PC-9 (cell line): ENCODE measurements at regions of chr17 and their contacts with region 1.

Region 1: DNA sequence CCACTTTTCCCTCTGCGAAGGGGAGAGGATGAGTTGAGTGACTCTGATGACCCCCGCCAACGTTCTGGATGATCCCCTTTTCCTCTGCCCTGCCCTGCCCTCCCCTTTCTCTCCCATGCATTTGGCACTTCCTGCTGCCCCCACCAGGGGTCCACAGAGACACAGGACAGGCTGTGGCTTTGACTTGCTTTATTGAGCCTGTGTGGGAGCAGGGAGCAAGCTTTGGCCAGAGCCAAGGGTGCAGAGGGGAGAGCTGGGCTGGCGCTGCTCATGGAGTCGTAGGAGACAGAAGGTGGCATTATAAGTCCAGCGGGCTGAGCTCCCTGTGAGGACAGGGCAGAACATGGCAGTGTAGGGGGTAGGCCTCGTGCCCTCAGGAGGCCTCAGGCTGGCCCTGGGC is 1.6 kb downstream of the PPY start:
- DNase-seq: peak in 1 of 2 experiments; percentile 27
- H3K4me3 ChIP-seq: no peak overlapping the region
- H3K27ac ChIP-seq: no peak overlapping the region
- H3K4me1 ChIP-seq: no peaks in the 10 kb centered on the region
- H3K27me3 ChIP-seq: peaks cover 6% of the 10 kb centered on the region
- CTCF ChIP-seq: peak; percentile 61

Region 2: DNA sequence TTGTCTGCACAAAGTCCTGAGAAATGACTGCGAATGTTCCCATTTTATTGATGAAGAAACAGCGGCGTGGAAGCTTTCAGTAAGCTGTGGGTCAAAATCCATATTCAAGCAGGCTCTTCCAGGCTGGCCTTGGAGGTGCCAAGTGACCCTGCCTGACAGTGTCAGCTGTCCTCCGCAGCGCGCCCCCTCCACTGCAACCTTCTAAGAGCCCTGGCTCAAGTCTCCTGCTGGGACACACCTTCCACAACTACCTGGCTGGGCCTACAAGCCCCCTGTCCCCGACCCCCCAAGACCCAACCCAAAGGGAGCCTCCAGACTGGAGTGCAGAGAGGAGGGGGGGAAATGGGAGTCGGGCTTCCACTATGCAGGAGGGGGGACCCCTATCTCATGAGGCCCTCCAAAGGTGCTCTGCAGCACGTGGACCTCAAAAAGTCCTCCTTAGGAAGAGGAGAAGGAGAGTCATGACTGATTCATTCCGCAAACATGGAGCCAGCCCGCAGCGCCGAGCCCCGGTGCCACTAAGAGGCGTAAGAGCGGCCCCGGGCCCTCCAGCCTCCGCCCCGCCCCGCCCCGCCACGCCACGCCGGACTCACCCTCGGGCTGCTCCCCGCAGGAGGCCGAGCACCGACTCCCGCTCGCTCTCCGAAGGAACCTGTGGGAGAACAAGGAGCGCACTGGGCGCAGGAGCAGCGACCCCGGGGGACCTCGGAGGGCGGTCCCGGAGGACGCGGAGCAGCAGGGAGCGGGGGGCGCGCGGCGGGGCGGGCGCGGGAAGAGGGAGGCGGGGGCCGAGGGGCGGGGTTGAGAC is 108.3 kb before region 1 on chr17:
- CTCF ChIA-PET with region 1: no interaction called
- POLR2A ChIA-PET with region 1: interaction called, 13 read pairs
- intact Hi-C with region 1: no loop called
- DNase-seq: peak; percentile 57 to 75
- H3K4me3 ChIP-seq: peak overlapping the region; percentile 60
- H3K27ac ChIP-seq: 0 out of 2 replicates have a peak overlapping the region, but pooled peaks have one; percentile 30
- H3K4me1 ChIP-seq: peaks cover 10% of the 10 kb centered on the region
- H3K27me3 ChIP-seq: no peaks in the 10 kb centered on the region
- CTCF ChIP-seq: no peak

Region 3: GRCh38 chr17:43994272-43995149 is 53.9 kb after region 1 on chr17:
- CTCF ChIA-PET with region 1: interaction called, 6 read pairs
- POLR2A ChIA-PET with region 1: no interaction called
- intact Hi-C with region 1: loop called (anchors 1 kb)
- DNase-seq: peak in 1 of 2 experiments; percentile 54
- H3K4me3 ChIP-seq: no peak overlapping the region; the same call in 1 of the 2 replicates
- H3K27ac ChIP-seq: no peak overlapping the region
- H3K4me1 ChIP-seq: no peaks in the 10 kb centered on the region
- H3K27me3 ChIP-seq: peaks cover 13% of the 10 kb centered on the region
- CTCF ChIP-seq: peak; percentile 90

Region 4: DNA sequence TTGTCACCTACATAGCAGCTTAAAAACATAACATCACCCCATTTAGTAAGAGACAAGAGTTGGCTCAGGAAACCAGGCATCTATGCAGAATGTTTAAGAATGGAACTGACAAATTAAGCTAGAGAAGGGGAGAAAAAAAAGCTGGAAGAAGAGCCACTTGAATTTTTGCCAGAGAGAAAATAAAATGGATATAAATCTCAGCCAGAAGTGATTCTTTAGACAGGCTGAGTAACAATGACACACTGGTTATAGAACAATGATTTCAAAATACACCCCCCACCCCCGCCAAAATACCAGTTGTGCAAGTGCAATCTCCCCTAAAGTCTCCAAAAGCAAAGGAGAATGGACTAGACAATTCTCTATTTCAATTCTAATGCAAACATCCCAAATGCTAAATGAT is 103.4 kb after region 1 on chr17:
- CTCF ChIA-PET with region 1: interaction called, 3 read pairs
- POLR2A ChIA-PET with region 1: no interaction called
- intact Hi-C with region 1: loop called (anchors 1 kb)
- DNase-seq: no peak
- H3K4me3 ChIP-seq: no peak overlapping the region
- H3K27ac ChIP-seq: no peak overlapping the region
- H3K4me1 ChIP-seq: no peaks in the 10 kb centered on the region
- H3K27me3 ChIP-seq: no peaks in the 10 kb centered on the region
- CTCF ChIP-seq: no peak

Region 5: DNA sequence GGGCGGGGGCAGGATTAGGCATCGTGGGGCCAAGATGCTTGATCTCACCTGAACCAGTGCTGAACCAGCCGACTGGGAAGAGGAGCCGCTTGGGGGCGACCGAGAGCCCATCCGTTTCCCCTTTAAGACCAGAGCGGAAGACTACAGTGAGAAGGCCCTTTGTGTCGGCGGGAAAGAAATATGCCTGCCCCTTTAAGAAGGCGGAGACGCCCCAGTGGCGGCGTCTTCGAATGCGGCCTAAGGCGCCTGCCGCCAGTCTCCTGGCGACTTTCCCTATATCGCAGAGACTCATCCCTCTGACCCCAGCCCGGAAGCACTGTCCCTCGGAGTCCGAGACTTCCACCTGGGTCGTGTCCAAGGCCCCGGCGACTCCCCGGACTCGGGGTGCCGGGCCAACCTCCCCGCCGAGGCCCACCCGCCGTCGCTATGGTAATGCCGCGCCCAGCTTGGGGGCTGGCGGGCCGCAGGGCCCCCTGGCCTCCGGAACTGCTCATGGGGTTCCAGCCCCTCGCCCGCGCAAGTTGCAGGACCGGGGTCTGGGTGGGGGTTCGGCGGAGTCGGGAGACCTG is 201.2 kb after region 1 on chr17 and contains the start of gene HROB:
- CTCF ChIA-PET with region 1: no interaction called
- POLR2A ChIA-PET with region 1: no interaction called
- intact Hi-C with region 1: no loop called
- DNase-seq: peak; percentile 86 to 96
- H3K4me3 ChIP-seq: peak within 1 kb of the TSS; percentile 91
- H3K27ac ChIP-seq: peak within 1 kb of the TSS; percentile 61
- H3K4me1 ChIP-seq: peaks cover 29% of the 10 kb centered on the region
- H3K27me3 ChIP-seq: no peaks in the 10 kb centered on the region
- CTCF ChIP-seq: peak; percentile 83
- total RNA-seq, gene HROB: 14.5 and 15.7 TPM in 2 replicates

Region 6: GRCh38 chr17:44170499-44171201 is 230.0 kb after region 1 on chr17 and contains the start of gene ASB16:
- CTCF ChIA-PET with region 1: interaction called, 8 read pairs
- POLR2A ChIA-PET with region 1: no interaction called
- intact Hi-C with region 1: loop called (anchors 1 kb)
- DNase-seq: no peak
- H3K4me3 ChIP-seq: no peak within 1 kb of the TSS
- H3K27ac ChIP-seq: no peak within 1 kb of the TSS
- H3K4me1 ChIP-seq: no peaks in the 10 kb centered on the region
- H3K27me3 ChIP-seq: no peaks in the 10 kb centered on the region
- CTCF ChIP-seq: no peak
- total RNA-seq, gene ASB16: not detected in 2 replicates

Region 7: DNA sequence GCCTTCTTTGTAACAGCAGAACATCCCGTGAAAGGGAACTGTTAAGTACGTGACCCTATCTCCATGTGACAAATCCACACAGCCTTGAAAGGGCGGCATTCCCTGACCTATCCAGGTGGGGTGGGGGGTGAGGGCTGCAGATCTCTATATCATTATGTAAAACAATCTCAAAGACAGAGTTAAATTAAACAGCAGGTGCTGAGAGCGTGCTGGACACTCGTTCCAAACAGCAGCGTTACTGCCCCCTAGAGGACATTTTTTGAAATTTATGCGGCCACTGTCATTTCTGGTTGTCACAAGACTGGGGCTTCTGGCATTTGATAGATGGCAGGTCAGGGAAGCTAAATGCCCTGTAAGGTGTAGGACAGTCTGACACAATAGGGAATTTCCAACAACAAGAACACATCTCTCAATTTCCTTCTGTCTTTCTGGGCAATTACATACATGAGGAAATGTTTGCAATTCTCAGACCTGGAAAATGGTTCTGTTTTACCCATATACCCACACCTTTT is 390.7 kb after region 1 on chr17:
- CTCF ChIA-PET with region 1: no interaction called
- POLR2A ChIA-PET with region 1: no interaction called
- intact Hi-C with region 1: loop called (anchors 5 kb)
- DNase-seq: peak; percentile 67 to 74
- H3K4me3 ChIP-seq: no peak overlapping the region
- H3K27ac ChIP-seq: no peak overlapping the region
- H3K4me1 ChIP-seq: peaks cover 11% of the 10 kb centered on the region; the same call in 1 of the 2 replicates
- H3K27me3 ChIP-seq: no peaks in the 10 kb centered on the region
- CTCF ChIP-seq: peak; percentile 90